ENCODE measurements at regions of chr4 and their contacts with region 1.

Region 1: GRCh38 chr4:170476145-170476750 is 386.5 kb upstream of the AADAT start:
- DNase-seq: no peak
- H3K4me3 ChIP-seq: no peak overlapping the region
- H3K27ac ChIP-seq: no peak overlapping the region
- H3K4me1 ChIP-seq: no peaks in the 10 kb centered on the region
- H3K27me3 ChIP-seq: no peaks in the 10 kb centered on the region
- CTCF ChIP-seq: no peak

Region 2: GRCh38 chr4:170348945-170349344 is 127.3 kb before region 1 on chr4:
- CTCF ChIA-PET with region 1: no interaction called
- POLR2A ChIA-PET with region 1: no interaction called
- intact Hi-C with region 1: no loop called
- DNase-seq: no peak
- H3K4me3 ChIP-seq: no peak overlapping the region
- H3K27ac ChIP-seq: no peak overlapping the region
- H3K4me1 ChIP-seq: no peaks in the 10 kb centered on the region
- H3K27me3 ChIP-seq: no peaks in the 10 kb centered on the region
- CTCF ChIP-seq: no peak

Region 3: DNA sequence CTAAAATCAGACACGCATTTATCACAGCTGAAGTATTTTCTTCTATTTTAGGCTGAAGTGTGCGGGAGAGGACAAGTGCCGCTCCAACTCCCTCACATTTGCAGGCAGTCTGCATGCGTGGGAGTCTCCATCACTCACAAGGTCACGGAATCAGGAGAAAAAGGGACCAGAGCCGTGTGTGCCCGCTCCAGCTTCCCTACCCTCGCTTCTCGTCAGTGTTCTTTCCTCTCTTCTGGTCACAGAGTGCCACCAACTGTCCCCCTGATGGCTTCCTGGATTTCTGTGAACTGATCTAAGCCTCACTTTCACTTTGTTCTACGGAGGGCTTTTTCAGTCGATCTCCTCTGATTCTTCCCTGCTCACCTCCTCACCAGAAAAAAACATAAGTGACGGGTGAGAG is 20.9 kb after region 1 on chr4:
- CTCF ChIA-PET with region 1: interaction called, 14 read pairs
- POLR2A ChIA-PET with region 1: no interaction called
- intact Hi-C with region 1: no loop called
- DNase-seq: no peak
- H3K4me3 ChIP-seq: peak overlapping the region; percentile 38; the same call in 1 of the 2 replicates
- H3K27ac ChIP-seq: no peak overlapping the region
- H3K4me1 ChIP-seq: no peaks in the 10 kb centered on the region
- H3K27me3 ChIP-seq: no peaks in the 10 kb centered on the region
- CTCF ChIP-seq: no peak

Region 4: DNA sequence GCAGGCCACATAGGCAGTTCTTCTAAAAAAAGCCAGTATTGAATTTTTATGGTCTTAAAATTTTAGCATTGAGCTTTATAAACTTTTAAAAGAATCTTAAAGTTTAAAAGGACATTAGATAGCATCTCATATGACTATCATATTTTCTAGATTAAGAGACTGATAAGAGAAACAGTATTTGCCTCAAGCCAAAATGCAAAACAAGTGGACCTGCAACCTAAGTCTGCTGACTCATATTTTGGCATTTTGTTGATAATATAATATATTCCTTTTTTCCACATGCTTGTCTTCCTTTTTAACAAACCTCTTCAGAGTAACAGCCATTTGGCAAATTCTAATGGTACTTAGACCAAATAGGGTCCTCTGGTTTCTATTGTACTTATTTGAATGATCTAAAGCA is 1008.4 kb after region 1 on chr4:
- CTCF ChIA-PET with region 1: no interaction called
- POLR2A ChIA-PET with region 1: no interaction called
- intact Hi-C with region 1: no loop called
- DNase-seq: no peak
- H3K4me3 ChIP-seq: no peak overlapping the region
- H3K27ac ChIP-seq: no peak overlapping the region
- H3K4me1 ChIP-seq: no peaks in the 10 kb centered on the region
- H3K27me3 ChIP-seq: no peaks in the 10 kb centered on the region
- CTCF ChIP-seq: no peak

Measured in PC-9 (cell line).